Psoas muscle (tissue), 8 donors: ENCODE measurements at regions of chr7 and their contacts with region 1.

Region 1: GRCh38 chr7:37448636-37449361 is at the start of gene ELMO1:
- DNase-seq: peak; percentile 76 to 84
- ATAC-seq: peak; percentile 56 to 79 (median 74)
- H3K4me3 ChIP-seq: peak within 1 kb of the TSS; percentile 74
- H3K27ac ChIP-seq: peak within 1 kb of the TSS; percentile 71
- H3K4me1 ChIP-seq: peaks cover 11% of the 10 kb centered on the region
- H3K27me3 ChIP-seq: peaks cover 0 to 20% (median 10%) of the 10 kb centered on the region in 3 donors
- CTCF ChIP-seq: peak; percentile 31
- total RNA-seq, gene ELMO1: 6.9 to 8.1 (median 7.3) TPM

Region 2: DNA sequence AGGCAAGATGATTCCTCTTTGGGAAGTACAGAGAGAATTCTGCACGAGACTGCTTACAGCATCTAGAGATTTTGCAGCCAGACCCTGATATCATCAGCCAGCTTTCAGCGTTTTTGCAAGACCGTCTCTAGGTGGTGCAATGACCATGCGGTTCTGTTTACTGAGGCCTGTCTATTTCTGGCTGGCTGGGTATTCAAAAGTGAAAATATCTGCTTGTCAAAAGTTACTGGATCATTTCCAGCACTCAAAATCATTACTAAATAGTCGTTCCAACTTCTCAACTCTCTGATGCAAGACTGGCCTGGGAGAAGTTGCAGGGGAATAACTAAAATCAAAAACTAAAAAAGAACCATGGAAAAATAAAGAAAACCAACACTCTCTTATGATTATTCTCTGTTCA is 240.3 kb before region 1 on chr7:
- intact Hi-C with region 1: loop called in 1 of 2 experiments (anchors 10 kb)
- DNase-seq: peak; percentile 60 to 63
- ATAC-seq: peak; percentile 69 to 96 (median 91)
- H3K4me3 ChIP-seq: no peak overlapping the region
- H3K27ac ChIP-seq: no peak overlapping the region
- H3K4me1 ChIP-seq: peaks cover 5% of the 10 kb centered on the region
- H3K27me3 ChIP-seq: no peaks in the 10 kb centered on the region
- CTCF ChIP-seq: peak; percentile 21

Region 3: DNA sequence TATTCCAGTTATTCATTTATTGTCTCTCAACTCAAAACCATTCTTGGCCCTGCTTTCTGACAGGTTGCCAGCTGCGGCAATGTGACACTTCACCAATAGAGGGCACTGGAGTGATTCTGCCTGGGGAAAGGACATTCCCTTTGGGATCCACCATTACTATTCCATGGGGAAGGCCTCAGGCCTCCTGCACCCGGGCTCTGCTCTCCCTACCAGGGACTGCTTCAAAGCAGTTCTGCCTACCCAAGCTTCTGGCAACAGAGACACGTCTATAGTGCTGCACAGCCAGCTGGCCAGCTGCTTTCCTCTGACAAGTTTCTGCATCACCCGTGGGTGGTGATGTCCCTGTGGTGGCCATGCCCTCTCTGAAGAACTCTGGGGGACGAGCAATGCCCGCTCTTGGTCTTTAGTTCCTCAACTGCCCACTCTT is 164.0 kb before region 1 on chr7:
- intact Hi-C with region 1: loop called in 1 of 2 experiments (anchors 10 kb)
- DNase-seq: peak in 1 of 2 donors; percentile 39
- ATAC-seq: peak in 1 of 4 donors; percentile 40
- H3K4me3 ChIP-seq: no peak overlapping the region
- H3K27ac ChIP-seq: no peak overlapping the region
- H3K4me1 ChIP-seq: no peaks in the 10 kb centered on the region
- H3K27me3 ChIP-seq: no peaks in the 10 kb centered on the region
- CTCF ChIP-seq: peak; percentile 52

Region 4: DNA sequence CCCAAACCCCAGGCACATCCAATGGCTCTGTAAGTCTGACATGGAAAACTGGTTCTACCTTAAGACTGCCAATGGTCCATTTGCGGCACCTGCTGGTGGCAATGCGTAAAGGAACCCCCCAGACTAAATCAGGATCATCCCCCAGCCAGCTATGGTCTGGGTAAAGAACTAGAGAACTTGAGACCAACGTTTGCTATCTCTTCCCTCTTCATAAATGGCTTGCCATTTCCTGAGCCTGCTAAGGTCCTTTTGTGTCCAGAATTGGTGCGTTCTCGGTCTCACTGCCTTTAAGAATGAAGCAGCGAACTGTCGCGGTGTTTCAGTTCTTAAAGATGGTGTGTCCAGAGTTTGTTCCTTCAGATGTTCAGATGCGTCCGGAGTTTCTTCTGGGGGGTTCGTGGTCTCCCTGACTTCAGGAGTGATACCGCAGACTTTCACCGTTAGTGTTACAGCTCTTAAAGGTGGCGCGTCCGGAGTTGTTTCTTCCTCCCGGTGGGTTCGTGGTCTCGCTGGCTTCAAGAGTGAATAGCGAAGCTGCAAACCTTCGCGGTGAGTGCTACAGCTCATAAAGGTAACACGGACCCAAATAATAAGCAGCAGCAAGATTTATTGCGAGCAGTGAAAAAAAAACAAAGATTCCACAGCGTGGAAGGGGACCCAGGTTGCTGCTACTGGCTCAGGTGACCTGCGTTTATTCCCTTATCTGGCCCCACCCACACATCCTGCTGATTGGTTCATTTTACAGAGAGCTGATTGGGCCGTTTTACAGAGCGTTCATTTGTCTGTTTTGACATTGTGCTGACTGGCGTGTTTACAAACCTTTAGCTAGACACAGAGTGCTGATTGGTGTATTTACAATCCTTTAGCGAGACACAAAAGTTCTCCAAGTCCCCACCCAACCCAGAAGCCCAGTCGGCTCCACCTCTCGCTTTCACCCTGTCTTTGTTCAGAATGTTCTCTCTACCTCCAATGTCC is 95.5 kb before region 1 on chr7:
- intact Hi-C with region 1: loop called in 1 of 2 experiments (anchors 5 kb)
- DNase-seq: peak in 1 of 2 donors; percentile 52
- ATAC-seq: peak in 1 of 4 donors; percentile 27
- H3K4me3 ChIP-seq: no peak overlapping the region
- H3K27ac ChIP-seq: peak overlapping the region; percentile 58
- H3K4me1 ChIP-seq: peaks cover 8% of the 10 kb centered on the region
- H3K27me3 ChIP-seq: no peaks in the 10 kb centered on the region
- CTCF ChIP-seq: no peak